Common myeloid progenitor, CD34-positive (primary cell): ENCODE measurements at regions of chr12 and their contacts with region 1.

Region 1: DNA sequence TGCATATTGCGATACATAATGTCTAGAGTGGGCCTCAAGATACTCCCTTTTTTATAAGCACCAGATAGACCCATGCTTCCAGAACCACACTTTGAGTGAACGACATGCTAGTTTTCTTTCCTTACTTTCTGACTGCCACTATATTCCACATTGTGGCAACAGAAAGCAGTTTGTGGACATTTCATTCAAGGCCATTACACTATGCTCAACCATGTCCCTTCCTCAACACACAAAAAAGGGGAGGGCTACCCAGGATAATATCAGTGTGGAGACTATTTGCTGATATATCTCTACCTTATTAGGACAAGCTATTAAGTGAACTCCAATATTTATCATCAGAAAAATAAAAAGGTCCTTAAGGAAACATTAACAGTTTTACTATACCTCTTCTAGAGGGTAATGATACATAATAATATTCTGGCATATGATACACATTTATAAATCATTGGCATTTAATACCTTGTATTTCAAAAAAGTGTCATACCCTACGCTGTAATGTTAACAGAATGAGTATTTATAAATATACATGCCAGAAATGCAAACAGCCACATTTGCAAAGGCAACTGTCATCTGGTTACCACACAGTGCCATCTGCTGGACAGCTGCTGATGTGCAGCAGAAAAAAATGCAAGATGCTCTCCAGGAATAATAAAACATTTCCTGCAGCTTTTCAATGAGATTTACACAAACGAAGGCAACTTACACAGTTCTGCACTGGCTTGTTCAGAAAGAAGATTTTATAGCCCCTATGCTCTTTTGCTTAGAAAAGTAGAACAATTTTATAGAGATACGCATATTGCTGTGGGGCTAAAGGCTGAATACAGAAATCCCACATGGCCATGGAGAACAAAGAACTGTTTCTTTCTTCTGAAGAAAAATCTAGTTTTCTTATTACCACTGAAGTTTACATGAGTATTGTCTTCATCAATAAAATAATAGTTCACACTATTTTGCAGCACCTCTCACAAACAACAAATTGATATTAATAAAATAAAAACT is 182.2 kb upstream of the GRIP1 start:
- DNase-seq: peak; percentile 59 to 80 (median 74)
- H3K4me3 ChIP-seq: no peak overlapping the region
- H3K27ac ChIP-seq: no peak overlapping the region
- H3K4me1 ChIP-seq: peaks cover 0 to 2% (median 0%) of the 10 kb centered on the region in 4 experiments
- H3K27me3 ChIP-seq: peaks cover 0 to 4% (median 0%) of the 10 kb centered on the region in 5 experiments

Region 2: GRCh38 chr12:66708704-66709456 is 152.2 kb before region 1 on chr12:
- CTCF ChIA-PET with region 1: interaction called, 19 read pairs
- POLR2A ChIA-PET with region 1: no interaction called
- DNase-seq: peak; percentile 27 to 59 (median 49)
- H3K4me3 ChIP-seq: no peak overlapping the region
- H3K27ac ChIP-seq: no peak overlapping the region
- H3K4me1 ChIP-seq: peaks cover 0 to 5% (median 0%) of the 10 kb centered on the region in 4 experiments
- H3K27me3 ChIP-seq: no peaks in the 10 kb centered on the region

Region 3: GRCh38 chr12:66885115-66885875 is 24.2 kb after region 1 on chr12:
- CTCF ChIA-PET with region 1: no interaction called
- POLR2A ChIA-PET with region 1: no interaction called
- DNase-seq: no peak
- H3K4me3 ChIP-seq: no peak overlapping the region
- H3K27ac ChIP-seq: no peak overlapping the region
- H3K4me1 ChIP-seq: no peaks in the 10 kb centered on the region
- H3K27me3 ChIP-seq: no peaks in the 10 kb centered on the region

Region 4: GRCh38 chr12:67025543-67026114 is 164.6 kb after region 1 on chr12:
- CTCF ChIA-PET with region 1: no interaction called
- POLR2A ChIA-PET with region 1: no interaction called
- DNase-seq: peak; percentile 23 to 50 (median 36)
- H3K4me3 ChIP-seq: no peak overlapping the region
- H3K27ac ChIP-seq: no peak overlapping the region
- H3K4me1 ChIP-seq: no peaks in the 10 kb centered on the region
- H3K27me3 ChIP-seq: peaks cover 0 to 4% (median 0%) of the 10 kb centered on the region in 5 experiments